ENCODE measurements at regions of chr19 and their contacts with region 1.

Region 1: GRCh38 chr19:49190781-49191180 is 33.2 kb downstream of the TRPM4 start:
- DNase-seq: no peak
- H3K4me3 ChIP-seq: no peak overlapping the region
- H3K27ac ChIP-seq: no peak overlapping the region
- H3K4me1 ChIP-seq: no peaks in the 10 kb centered on the region
- H3K27me3 ChIP-seq: no peaks in the 10 kb centered on the region
- CTCF ChIP-seq: no peak

Region 2: DNA sequence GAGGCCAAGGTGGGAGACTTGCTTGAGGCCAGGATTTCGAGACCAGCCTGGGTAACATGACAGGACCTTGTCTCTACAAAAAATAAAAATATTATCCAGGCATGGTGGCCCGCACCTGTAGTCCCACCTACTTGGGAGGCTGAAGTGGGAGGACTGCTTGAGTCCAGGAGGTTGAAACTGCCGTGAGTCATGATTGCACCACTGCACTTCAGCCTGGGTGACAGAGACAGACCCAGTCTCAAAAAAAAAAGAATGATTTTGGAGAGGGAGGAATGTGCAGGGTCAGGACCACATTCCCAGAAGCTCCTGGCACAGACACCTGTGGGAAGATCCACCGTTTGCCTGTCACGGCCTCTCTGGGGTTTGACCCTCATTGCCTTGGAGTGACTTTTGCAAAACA is 245.4 kb before region 1 on chr19:
- CTCF ChIA-PET with region 1: no interaction called
- dilution Hi-C with region 1: no loop called
- in situ Hi-C with region 1: no loop called
- intact Hi-C with region 1: no loop called
- DNase-seq: no peak
- H3K4me3 ChIP-seq: no peak overlapping the region
- H3K27ac ChIP-seq: no peak overlapping the region
- H3K4me1 ChIP-seq: no peaks in the 10 kb centered on the region
- H3K27me3 ChIP-seq: no peaks in the 10 kb centered on the region
- CTCF ChIP-seq: no peak

Region 3: GRCh38 chr19:49142866-49143335 is 47.9 kb before region 1 on chr19:
- CTCF ChIA-PET with region 1: no interaction called
- dilution Hi-C with region 1: loop called (anchors 5 kb)
- in situ Hi-C with region 1: no loop called
- intact Hi-C with region 1: no loop called
- DNase-seq: peak; percentile 76
- H3K4me3 ChIP-seq: peak overlapping the region; percentile 46 to 77 (median 53)
- H3K27ac ChIP-seq: no peak overlapping the region
- H3K4me1 ChIP-seq: no peaks in the 10 kb centered on the region
- H3K27me3 ChIP-seq: no peaks in the 10 kb centered on the region
- CTCF ChIP-seq: no peak

Region 4: DNA sequence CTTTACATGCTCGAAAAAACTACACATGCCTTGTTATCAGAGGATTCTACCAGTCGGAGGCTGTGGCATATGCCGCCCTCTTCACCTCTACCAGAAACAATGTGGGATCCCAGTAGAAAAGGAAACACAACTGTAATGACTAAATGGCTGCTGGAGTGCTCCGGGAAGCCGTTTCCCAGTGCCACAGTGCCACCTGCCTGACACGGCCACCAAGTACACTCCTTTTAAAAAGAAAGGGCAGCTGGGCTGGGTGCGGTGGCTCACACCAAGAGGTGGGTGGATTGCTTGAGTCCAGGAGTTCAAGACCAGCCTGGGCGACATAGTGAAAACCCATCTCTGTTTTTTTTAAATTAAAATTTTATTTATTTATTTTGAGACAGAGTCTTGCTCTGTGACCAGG is 34.1 kb after region 1 on chr19:
- CTCF ChIA-PET with region 1: no interaction called
- dilution Hi-C with region 1: no loop called
- in situ Hi-C with region 1: no loop called
- intact Hi-C with region 1: no loop called
- DNase-seq: peak; percentile 63
- H3K4me3 ChIP-seq: no peak overlapping the region
- H3K27ac ChIP-seq: no peak overlapping the region
- H3K4me1 ChIP-seq: no peaks in the 10 kb centered on the region
- H3K27me3 ChIP-seq: no peaks in the 10 kb centered on the region
- CTCF ChIP-seq: peak; percentile 55 to 66

Region 5: GRCh38 chr19:49272184-49272583 is 81.4 kb after region 1 on chr19:
- CTCF ChIA-PET with region 1: no interaction called
- dilution Hi-C with region 1: loop called (anchors 5 kb)
- in situ Hi-C with region 1: no loop called
- intact Hi-C with region 1: no loop called
- DNase-seq: peak; percentile 97
- H3K4me3 ChIP-seq: no peak overlapping the region
- H3K27ac ChIP-seq: peak overlapping the region; percentile 69
- H3K4me1 ChIP-seq: peaks cover 22% of the 10 kb centered on the region
- H3K27me3 ChIP-seq: no peaks in the 10 kb centered on the region
- CTCF ChIP-seq: no peak

Measured in mammary epithelial cell (primary cell).